B cell (primary cell): ENCODE measurements at regions of chr17 and their contacts with region 1.

Region 1: GRCh38 chr17:50139950-50140871 is 10.3 kb upstream of the SAMD14 start:
- DNase-seq: peak; percentile 85
- ATAC-seq: peak; percentile 83
- H3K4me3 ChIP-seq: no peak overlapping the region
- H3K4me3 Mint-ChIP-seq: peak overlapping the region; percentile 64
- H3K27ac ChIP-seq: peak overlapping the region in 1 of 2 donors; percentile 48
- H3K27ac Mint-ChIP-seq: peak overlapping the region; percentile 81
- H3K4me1 ChIP-seq: peaks cover 51 to 60% of the 10 kb centered on the region in 2 donors
- H3K4me1 Mint-ChIP-seq: peaks cover 61% of the 10 kb centered on the region
- H3K27me3 ChIP-seq: no peaks in the 10 kb centered on the region
- H3K27me3 Mint-ChIP-seq: no peaks in the 10 kb centered on the region
- CTCF ChIP-seq: peak; percentile 92

Region 2: DNA sequence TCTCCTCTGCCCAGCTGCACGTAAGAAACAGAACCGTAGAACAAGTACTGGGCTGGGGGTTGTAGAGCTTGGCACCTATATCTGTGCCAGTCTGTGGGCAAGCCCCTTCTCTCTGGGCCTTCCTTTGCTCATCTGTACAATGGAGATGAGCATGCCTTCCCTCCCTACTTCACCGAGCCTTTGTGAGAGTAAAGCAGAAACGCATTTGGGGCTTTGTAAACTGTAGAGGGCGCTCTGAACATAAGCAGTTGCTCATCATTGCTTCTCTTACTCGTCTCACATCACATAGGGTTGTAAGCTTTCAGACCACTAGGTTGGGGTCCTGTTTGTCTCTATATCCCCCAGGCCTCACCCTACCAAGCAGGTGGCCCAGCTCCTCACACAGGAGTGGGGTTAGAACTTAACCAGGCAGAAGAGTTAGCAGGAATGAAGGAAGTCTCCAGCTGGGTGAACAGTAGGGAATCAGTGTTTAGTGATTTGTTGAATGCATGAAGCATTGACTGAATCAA is 25.3 kb before region 1 on chr17:
- CTCF ChIA-PET with region 1: interaction called, 18 read pairs
- POLR2A ChIA-PET with region 1: interaction called, 3 read pairs
- intact Hi-C with region 1: no loop called
- DNase-seq: peak; percentile 66
- ATAC-seq: peak; percentile 20
- H3K4me3 ChIP-seq: no peak overlapping the region
- H3K4me3 Mint-ChIP-seq: peak overlapping the region; percentile 48
- H3K27ac ChIP-seq: no peak overlapping the region
- H3K27ac Mint-ChIP-seq: no peak overlapping the region
- H3K4me1 ChIP-seq: peaks cover 10 to 20% of the 10 kb centered on the region in 2 donors
- H3K4me1 Mint-ChIP-seq: peaks cover 14% of the 10 kb centered on the region
- H3K27me3 ChIP-seq: peaks cover 0 to 46% (median 16%) of the 10 kb centered on the region in 4 experiments
- H3K27me3 Mint-ChIP-seq: peaks cover 45% of the 10 kb centered on the region
- CTCF ChIP-seq: peak; percentile 72

Region 3: GRCh38 chr17:50129728-50130558 is 10.3 kb before region 1 on chr17 and contains the start of gene SAMD14:
- CTCF ChIA-PET with region 1: interaction called, 10 read pairs
- POLR2A ChIA-PET with region 1: interaction called, 5 read pairs
- intact Hi-C with region 1: no loop called
- DNase-seq: peak; percentile 69
- ATAC-seq: peak; percentile 61
- H3K4me3 ChIP-seq: peak within 1 kb of the TSS in 4 of 5 experiments; percentile 49 to 69 (median 57)
- H3K4me3 Mint-ChIP-seq: peak within 1 kb of the TSS; percentile 83
- H3K27ac ChIP-seq: no peak within 1 kb of the TSS
- H3K27ac Mint-ChIP-seq: peak within 1 kb of the TSS; percentile 83
- H3K4me1 ChIP-seq: peaks cover 27 to 35% of the 10 kb centered on the region in 2 donors
- H3K4me1 Mint-ChIP-seq: peaks cover 34% of the 10 kb centered on the region
- H3K27me3 ChIP-seq: peaks cover 0 to 28% (median 9%) of the 10 kb centered on the region in 4 experiments
- H3K27me3 Mint-ChIP-seq: peaks cover 10% of the 10 kb centered on the region
- CTCF ChIP-seq: no peak
- total RNA-seq, gene SAMD14: 0.78 and 0.89 TPM in 2 replicates

Region 4: GRCh38 chr17:50151041-50151936 is 11.1 kb after region 1 on chr17:
- CTCF ChIA-PET with region 1: interaction called, 35 read pairs
- POLR2A ChIA-PET with region 1: interaction called, 8 read pairs
- intact Hi-C with region 1: loop called (anchors 1 kb)
- DNase-seq: peak; percentile 90
- ATAC-seq: peak; percentile 48
- H3K4me3 ChIP-seq: peak overlapping the region; percentile 70 to 97 (median 85)
- H3K4me3 Mint-ChIP-seq: peak overlapping the region; percentile 95
- H3K27ac ChIP-seq: peak overlapping the region; percentile 48 to 75
- H3K27ac Mint-ChIP-seq: peak overlapping the region; percentile 94
- H3K4me1 ChIP-seq: peaks cover 17 to 46% of the 10 kb centered on the region in 2 donors
- H3K4me1 Mint-ChIP-seq: peaks cover 37% of the 10 kb centered on the region
- H3K27me3 ChIP-seq: no peaks in the 10 kb centered on the region
- H3K27me3 Mint-ChIP-seq: no peaks in the 10 kb centered on the region
- CTCF ChIP-seq: peak; percentile 60

Region 5: GRCh38 chr17:50161023-50161910 is 21.1 kb after region 1 on chr17:
- CTCF ChIA-PET with region 1: interaction called, 79 read pairs
- POLR2A ChIA-PET with region 1: interaction called, 9 read pairs
- intact Hi-C with region 1: loop called (anchors 1 kb)
- DNase-seq: peak; percentile 93
- ATAC-seq: peak; percentile 92
- H3K4me3 ChIP-seq: peak overlapping the region; percentile 52 to 68 (median 66)
- H3K4me3 Mint-ChIP-seq: peak overlapping the region; percentile 80
- H3K27ac ChIP-seq: no peak overlapping the region
- H3K27ac Mint-ChIP-seq: peak overlapping the region; percentile 72
- H3K4me1 ChIP-seq: peaks cover 36 to 41% of the 10 kb centered on the region in 2 donors
- H3K4me1 Mint-ChIP-seq: peaks cover 38% of the 10 kb centered on the region
- H3K27me3 ChIP-seq: no peaks in the 10 kb centered on the region
- H3K27me3 Mint-ChIP-seq: no peaks in the 10 kb centered on the region
- CTCF ChIP-seq: peak; percentile 97

Region 6: DNA sequence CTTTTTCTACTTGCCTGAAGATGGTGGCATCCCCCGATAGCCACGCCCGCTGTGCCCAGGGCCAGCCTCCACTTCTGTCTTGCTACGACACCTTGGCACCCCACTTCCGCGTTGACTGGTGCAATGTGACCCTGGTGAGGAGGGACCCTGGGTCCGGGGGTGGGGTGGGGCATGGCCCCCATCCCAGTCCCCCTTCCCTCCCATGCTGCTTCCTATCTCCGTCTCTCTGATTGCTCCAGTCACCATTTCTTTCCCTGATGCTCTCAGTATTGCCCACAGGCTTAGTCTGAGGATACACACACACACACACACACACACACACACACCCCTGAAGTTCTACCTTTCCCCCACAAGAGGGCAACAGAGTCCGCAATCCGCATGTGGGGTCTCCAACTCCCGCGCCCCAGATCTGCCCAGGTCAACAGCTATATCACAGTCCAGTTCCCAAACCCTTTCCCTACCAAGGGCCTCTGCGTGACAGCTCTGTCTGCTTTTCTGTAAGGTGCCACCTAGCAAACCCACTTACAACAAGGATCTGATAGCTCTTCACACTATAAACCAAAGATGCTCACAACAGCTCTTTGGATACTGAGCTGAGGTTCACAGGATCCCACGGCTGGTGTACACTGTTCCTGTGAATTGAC is 29.0 kb after region 1 on chr17:
- CTCF ChIA-PET with region 1: interaction called, 28 read pairs
- POLR2A ChIA-PET with region 1: no interaction called
- intact Hi-C with region 1: loop called (anchors 2 kb)
- DNase-seq: peak; percentile 91
- ATAC-seq: peak; percentile 84
- H3K4me3 ChIP-seq: peak overlapping the region in 4 of 5 experiments; percentile 12 to 44 (median 29)
- H3K4me3 Mint-ChIP-seq: peak overlapping the region; percentile 64
- H3K27ac ChIP-seq: no peak overlapping the region
- H3K27ac Mint-ChIP-seq: peak overlapping the region; percentile 74
- H3K4me1 ChIP-seq: peaks cover 16 to 27% of the 10 kb centered on the region in 2 donors
- H3K4me1 Mint-ChIP-seq: peaks cover 13% of the 10 kb centered on the region
- H3K27me3 ChIP-seq: no peaks in the 10 kb centered on the region
- H3K27me3 Mint-ChIP-seq: no peaks in the 10 kb centered on the region
- CTCF ChIP-seq: peak; percentile 66

Region 7: DNA sequence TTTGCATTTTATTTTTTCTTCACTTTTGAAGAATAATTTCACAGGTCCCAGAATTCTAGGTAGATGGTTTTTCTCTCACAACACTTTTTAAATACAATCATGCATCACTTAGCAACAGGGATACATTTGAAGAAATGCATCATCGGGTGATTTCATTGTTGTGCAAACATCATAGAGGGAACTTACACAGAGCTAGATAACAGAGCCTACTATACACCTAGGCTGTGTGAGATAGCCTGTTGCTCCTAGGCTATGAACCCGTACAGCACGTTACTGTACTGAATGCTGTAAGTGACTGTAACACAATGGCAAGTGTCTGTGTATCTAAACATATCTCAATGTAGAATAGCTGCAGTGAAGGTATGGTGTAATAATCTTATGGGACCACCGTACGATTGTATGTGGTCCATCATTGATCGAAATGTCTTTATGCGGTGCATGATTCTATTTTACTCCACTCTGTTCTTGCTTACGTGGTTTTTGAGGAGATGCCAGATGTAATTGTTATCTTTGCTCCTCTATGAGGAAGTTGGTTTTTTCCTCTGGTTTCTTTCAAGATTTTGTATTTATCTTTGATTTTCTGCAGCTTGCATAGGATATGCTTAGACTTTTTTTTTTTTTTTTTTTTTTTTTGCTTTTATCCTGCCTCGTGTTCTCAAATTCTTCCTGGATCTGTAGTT is 98.5 kb after region 1 on chr17:
- CTCF ChIA-PET with region 1: no interaction called
- POLR2A ChIA-PET with region 1: no interaction called
- intact Hi-C with region 1: no loop called
- DNase-seq: no peak
- ATAC-seq: no peak
- H3K4me3 ChIP-seq: no peak overlapping the region
- H3K4me3 Mint-ChIP-seq: no peak overlapping the region
- H3K27ac ChIP-seq: no peak overlapping the region
- H3K27ac Mint-ChIP-seq: no peak overlapping the region
- H3K4me1 ChIP-seq: no peaks in the 10 kb centered on the region
- H3K4me1 Mint-ChIP-seq: no peaks in the 10 kb centered on the region
- H3K27me3 ChIP-seq: peaks cover 0 to 13% (median 5%) of the 10 kb centered on the region in 4 experiments
- H3K27me3 Mint-ChIP-seq: peaks cover 39% of the 10 kb centered on the region
- CTCF ChIP-seq: no peak